ENCODE measurements at regions of chr7 and their contacts with region 1.

Region 1: GRCh38 chr7:21256310-21256877 is 171.5 kb upstream of the SP4 start:
- DNase-seq: no peak
- ATAC-seq: no peak

Region 2: GRCh38 chr7:21507626-21508343 is 251.4 kb after region 1 on chr7:
- intact Hi-C with region 1: loop called (anchors 5 kb)
- DNase-seq: no peak
- ATAC-seq: peak; percentile 57

Region 3: DNA sequence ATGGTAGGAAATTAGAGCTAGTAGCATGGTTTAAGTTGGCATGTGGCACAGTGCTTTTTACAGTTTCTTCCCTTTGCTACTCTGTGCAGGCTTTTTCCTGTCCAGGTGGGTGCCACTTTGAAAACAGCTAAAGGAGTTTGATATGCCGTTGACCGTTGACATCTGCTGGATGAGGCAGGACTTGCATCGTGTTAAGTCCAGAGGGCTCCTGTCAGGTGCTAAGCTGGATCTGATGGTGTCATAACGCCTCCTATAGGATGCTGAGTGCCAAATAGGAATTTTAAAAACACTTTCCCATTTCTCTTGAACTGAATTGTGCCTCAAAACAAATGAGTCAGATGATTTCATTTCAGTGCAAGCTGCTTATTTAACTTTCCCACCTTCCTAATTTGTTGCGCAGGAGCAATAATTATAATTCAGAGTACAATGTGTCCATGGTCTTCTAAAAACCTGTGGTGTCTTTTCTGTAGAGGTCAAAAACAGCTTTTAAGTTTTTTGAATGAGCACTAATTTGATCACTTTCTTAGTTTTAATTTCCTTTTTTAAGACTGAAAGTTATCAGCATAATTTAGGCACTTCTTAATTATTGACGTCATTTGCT is 511.0 kb after region 1 on chr7:
- intact Hi-C with region 1: loop called (anchors 5 kb)
- DNase-seq: no peak
- ATAC-seq: peak; percentile 95

Region 4: GRCh38 chr7:21996641-21997040 is 740.2 kb after region 1 on chr7:
- intact Hi-C with region 1: no loop called
- DNase-seq: no peak
- ATAC-seq: no peak